Heart left ventricle (tissue), 16 donors: ENCODE measurements at regions of chr19 and their contacts with region 1.

Region 1: GRCh38 chr19:53212703-53213320 is 19.7 kb upstream of the ZNF665 start:
- DNase-seq: no peak
- ATAC-seq: no peak
- H3K4me3 ChIP-seq: no peak overlapping the region
- H3K27ac ChIP-seq: no peak overlapping the region
- H3K4me1 ChIP-seq: no peaks in the 10 kb centered on the region
- H3K27me3 ChIP-seq: no peaks in the 10 kb centered on the region
- CTCF ChIP-seq: no peak
- POLR2A ChIP-seq: no peak

Region 2: GRCh38 chr19:53246498-53246897 is 33.7 kb after region 1 on chr19:
- intact Hi-C with region 1: loop called in 1 of 10 experiments (anchors 5 kb)
- DNase-seq: no peak
- ATAC-seq: no peak
- H3K4me3 ChIP-seq: no peak overlapping the region
- H3K27ac ChIP-seq: no peak overlapping the region
- H3K4me1 ChIP-seq: no peaks in the 10 kb centered on the region
- H3K27me3 ChIP-seq: no peaks in the 10 kb centered on the region
- CTCF ChIP-seq: no peak
- POLR2A ChIP-seq: no peak